Caco-2 (cell line): ENCODE measurements at regions of chr2 and their contacts with region 1.

Region 1: DNA sequence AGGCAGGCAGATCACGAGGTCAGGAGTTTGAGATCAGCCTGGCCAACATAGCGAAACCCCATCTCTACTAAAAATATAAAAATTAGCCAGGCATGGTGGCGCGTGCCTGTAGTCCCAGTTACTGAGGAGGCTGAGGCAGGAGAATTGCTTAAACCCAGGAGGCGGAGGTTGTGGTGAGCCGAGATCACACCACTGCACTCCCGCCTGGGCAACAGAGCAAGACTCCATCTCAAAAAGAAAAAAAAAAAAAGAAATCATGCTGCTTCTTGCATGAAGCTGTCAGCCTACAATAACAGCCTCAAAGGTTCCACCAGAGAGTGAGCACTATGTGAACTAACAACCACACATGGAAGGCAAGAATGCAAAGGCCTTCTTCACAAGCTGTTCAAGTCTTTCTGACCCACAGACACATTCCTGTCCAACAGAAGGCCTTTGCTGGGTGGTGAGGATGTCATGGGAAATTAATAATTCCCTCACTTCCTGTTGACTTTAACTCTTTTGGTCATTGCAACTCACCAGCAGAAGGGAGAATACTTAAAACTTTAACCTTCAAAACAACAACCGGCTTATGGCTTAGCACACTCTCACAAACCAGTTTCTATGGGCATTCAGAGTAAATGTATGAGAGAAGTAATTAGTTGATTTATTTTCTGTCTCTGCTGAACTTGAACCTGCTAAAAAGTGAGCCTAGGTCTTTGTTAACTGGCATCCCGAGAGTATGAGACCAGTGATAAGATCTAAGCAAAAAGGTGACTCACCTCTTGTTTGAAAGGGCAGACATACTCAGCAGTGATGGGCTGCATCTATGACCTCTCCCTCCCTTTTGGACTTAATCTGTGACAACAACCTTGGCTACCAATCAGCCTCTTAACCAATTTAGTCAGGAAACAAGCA is 11.8 kb downstream of the PLEKHM3 start:
- DNase-seq: peak; percentile 32 to 53
- H3K4me3 ChIP-seq: no peak overlapping the region
- H3K4me3 Mint-ChIP-seq: no peak overlapping the region
- H3K27ac Mint-ChIP-seq: no peak overlapping the region
- H3K4me1 ChIP-seq: peaks cover 43% of the 10 kb centered on the region
- H3K4me1 Mint-ChIP-seq: peaks cover 10% of the 10 kb centered on the region
- H3K27me3 ChIP-seq: no peaks in the 10 kb centered on the region
- H3K27me3 Mint-ChIP-seq: no peaks in the 10 kb centered on the region
- CTCF ChIP-seq: no peak

Region 2: GRCh38 chr2:208033758-208034502 is 20.4 kb after region 1 on chr2:
- CTCF ChIA-PET with region 1: no interaction called
- POLR2A ChIA-PET with region 1: no interaction called
- intact Hi-C with region 1: loop called (anchors 1 kb)
- DNase-seq: peak; percentile 82 to 85
- H3K4me3 ChIP-seq: no peak overlapping the region
- H3K4me3 Mint-ChIP-seq: no peak overlapping the region
- H3K27ac Mint-ChIP-seq: peak overlapping the region; percentile 70
- H3K4me1 ChIP-seq: peaks cover 51% of the 10 kb centered on the region
- H3K4me1 Mint-ChIP-seq: peaks cover 39% of the 10 kb centered on the region
- H3K27me3 ChIP-seq: no peaks in the 10 kb centered on the region
- H3K27me3 Mint-ChIP-seq: no peaks in the 10 kb centered on the region
- CTCF ChIP-seq: peak; percentile 36

Region 3: DNA sequence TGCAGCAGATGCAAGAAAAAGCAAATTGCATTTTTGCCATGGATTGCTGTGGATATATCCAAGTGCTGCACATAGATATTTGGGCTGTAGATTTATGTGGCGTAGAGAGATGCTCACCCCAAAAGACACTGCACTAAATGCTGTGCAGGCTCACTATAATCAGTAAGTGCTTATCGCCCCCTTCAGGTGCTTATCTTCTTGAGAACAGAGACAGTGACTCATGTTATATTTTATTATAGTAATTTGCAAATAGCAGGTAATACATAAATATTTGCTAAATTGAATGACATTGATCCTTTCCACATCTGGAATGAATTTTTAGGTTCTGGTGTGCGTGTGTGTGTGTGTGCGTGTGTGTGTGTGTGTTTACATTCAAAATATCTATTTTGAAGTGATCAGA is 48.6 kb after region 1 on chr2:
- CTCF ChIA-PET with region 1: no interaction called
- POLR2A ChIA-PET with region 1: no interaction called
- intact Hi-C with region 1: no loop called
- DNase-seq: peak in 1 of 2 experiments; percentile 59
- H3K4me3 ChIP-seq: no peak overlapping the region
- H3K4me3 Mint-ChIP-seq: no peak overlapping the region
- H3K27ac Mint-ChIP-seq: no peak overlapping the region
- H3K4me1 ChIP-seq: no peaks in the 10 kb centered on the region
- H3K4me1 Mint-ChIP-seq: no peaks in the 10 kb centered on the region
- H3K27me3 ChIP-seq: no peaks in the 10 kb centered on the region
- H3K27me3 Mint-ChIP-seq: no peaks in the 10 kb centered on the region
- CTCF ChIP-seq: peak; percentile 47 to 56

Region 4: DNA sequence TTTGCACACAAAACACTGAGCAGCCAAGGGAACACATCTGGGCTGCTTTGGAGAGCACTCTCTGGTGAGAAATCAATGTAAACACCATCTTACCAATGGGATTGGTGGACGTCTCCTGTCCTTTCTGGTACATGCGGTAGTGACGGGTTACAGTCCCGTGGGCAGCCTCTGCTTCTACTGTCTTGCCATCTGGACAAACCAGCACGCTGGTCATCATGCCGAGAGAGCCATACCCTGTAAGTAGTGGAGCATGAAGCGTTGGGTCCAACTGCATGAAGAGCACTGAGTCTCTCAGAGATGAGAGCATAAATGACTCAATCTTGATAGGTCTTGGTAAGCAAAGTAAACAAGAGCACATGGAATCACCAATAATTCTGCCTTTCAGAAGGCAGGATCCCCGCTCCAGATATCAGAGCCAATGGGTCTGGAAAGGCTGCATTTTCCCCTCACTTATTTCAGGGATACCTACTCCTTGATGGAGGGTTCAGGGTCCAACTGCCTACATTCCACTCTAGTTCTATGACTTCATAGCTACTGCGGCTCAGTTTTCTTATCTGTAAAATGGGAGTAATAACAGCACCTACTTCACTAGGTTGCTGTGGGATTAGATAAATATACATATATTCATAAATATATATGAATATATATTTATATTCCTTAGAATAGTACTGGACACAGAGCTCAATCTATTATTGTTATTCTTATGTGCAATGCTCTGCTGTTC is 226.4 kb after region 1 on chr2:
- CTCF ChIA-PET with region 1: no interaction called
- POLR2A ChIA-PET with region 1: no interaction called
- intact Hi-C with region 1: no loop called
- DNase-seq: no peak
- H3K4me3 ChIP-seq: no peak overlapping the region
- H3K4me3 Mint-ChIP-seq: no peak overlapping the region
- H3K27ac Mint-ChIP-seq: no peak overlapping the region
- H3K4me1 ChIP-seq: peaks cover 12% of the 10 kb centered on the region
- H3K4me1 Mint-ChIP-seq: peaks cover 15% of the 10 kb centered on the region
- H3K27me3 ChIP-seq: no peaks in the 10 kb centered on the region
- H3K27me3 Mint-ChIP-seq: no peaks in the 10 kb centered on the region
- CTCF ChIP-seq: no peak

Region 5: GRCh38 chr2:208250391-208250790 is 236.9 kb after region 1 on chr2:
- CTCF ChIA-PET with region 1: no interaction called
- POLR2A ChIA-PET with region 1: no interaction called
- intact Hi-C with region 1: no loop called
- DNase-seq: no peak
- H3K4me3 ChIP-seq: no peak overlapping the region
- H3K4me3 Mint-ChIP-seq: no peak overlapping the region
- H3K27ac Mint-ChIP-seq: no peak overlapping the region
- H3K4me1 ChIP-seq: peaks cover 19% of the 10 kb centered on the region
- H3K4me1 Mint-ChIP-seq: no peaks in the 10 kb centered on the region
- H3K27me3 ChIP-seq: no peaks in the 10 kb centered on the region
- H3K27me3 Mint-ChIP-seq: no peaks in the 10 kb centered on the region
- CTCF ChIP-seq: no peak